MCF 10A (cell line): ENCODE measurements at regions of chr16 and their contacts with region 1.

Region 1: DNA sequence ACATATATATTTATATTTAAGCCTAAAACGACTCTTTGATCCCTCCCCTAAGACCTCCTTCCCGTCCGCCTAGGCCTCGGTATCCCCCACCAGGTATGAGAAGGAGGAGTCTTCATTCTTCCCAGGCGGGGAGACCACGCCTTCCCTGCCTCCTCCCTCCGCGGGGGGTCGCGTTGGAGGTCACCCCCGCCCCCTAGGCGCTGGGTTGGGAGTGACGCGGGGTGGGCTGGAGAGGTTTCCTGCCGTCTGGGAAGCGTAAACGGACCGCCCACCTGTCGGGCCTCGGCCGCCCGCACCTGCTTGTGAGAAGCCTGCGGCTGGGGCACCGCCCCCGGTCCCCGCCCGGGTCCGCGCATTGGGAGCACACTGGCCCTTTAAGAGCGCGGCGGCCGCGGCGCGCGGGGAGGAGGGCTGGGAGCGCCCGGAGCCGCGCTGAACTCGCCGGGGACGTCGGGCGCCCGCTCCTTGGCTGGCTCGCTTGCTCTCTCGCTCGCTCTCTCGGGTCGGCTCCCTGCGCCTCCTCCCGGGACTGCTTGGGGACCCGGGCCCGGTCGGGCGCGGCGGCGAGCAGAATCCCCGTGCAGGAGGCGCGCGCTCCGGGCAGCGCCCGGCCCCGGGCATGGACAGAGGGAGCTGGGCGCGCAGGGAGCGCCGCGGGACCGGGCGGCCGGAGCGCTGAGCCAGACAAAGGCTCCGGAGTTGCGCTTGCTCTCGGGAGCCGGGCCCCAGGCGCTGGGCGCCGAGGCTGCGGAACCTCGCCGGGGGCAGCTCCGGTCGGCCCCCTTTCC is at the start of gene MMP15:
- DNase-seq: peak; percentile 71
- H3K4me3 Mint-ChIP-seq: peak within 1 kb of the TSS; percentile 56
- H3K27ac Mint-ChIP-seq: no peak within 1 kb of the TSS
- H3K4me1 Mint-ChIP-seq: peaks cover 13% of the 10 kb centered on the region
- H3K27me3 Mint-ChIP-seq: no peaks in the 10 kb centered on the region
- CTCF ChIP-seq: no peak
- total RNA-seq, gene MMP15: 1.3 and 1.7 TPM in 2 replicates

Region 2: GRCh38 chr16:58096249-58096648 is 70.7 kb after region 1 on chr16:
- CTCF ChIA-PET with region 1: interaction called, 3 read pairs
- POLR2A ChIA-PET with region 1: no interaction called
- intact Hi-C with region 1: loop called (anchors 2 kb)
- DNase-seq: no peak
- H3K4me3 Mint-ChIP-seq: no peak overlapping the region
- H3K27ac Mint-ChIP-seq: no peak overlapping the region
- H3K4me1 Mint-ChIP-seq: peaks cover 12% of the 10 kb centered on the region
- H3K27me3 Mint-ChIP-seq: peaks cover 17% of the 10 kb centered on the region
- CTCF ChIP-seq: no peak

Region 3: DNA sequence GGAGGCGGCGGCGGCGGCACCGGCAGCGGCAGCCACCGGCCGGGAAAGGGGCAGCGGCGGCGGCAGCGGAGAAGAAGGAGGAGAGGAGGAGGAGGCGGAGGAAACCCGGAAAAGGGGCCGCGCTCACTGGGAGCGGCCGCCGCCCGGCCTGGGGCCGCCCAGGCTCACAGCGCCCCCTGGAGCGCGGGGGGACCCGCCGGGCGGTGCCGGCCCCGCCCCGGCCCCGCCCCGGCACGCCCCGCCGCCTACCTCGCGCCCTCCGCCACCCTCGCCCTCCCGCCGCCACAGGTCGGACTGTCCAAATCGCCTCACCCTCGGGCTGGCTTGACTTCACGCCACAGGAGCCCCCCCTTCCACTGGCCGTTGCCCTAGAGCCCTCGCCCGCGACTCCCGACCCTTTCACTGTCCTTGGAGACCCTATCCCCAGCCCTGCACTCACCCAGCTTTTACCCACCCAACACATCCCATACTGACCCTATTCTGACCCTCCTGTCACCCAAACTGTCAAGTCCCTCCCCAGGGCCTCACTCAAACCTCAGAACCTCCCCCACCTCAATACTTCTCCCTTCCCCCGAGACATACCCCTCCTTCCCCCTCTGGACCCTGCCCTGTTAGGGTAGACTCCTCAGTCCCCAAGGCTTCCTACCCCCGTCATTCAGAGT is 172.6 kb after region 1 on chr16 and contains the start of gene CSNK2A2:
- CTCF ChIA-PET with region 1: interaction called, 4 read pairs
- POLR2A ChIA-PET with region 1: interaction called, 3 read pairs
- intact Hi-C with region 1: loop called (anchors 1 kb)
- DNase-seq: peak; percentile 76
- H3K4me3 Mint-ChIP-seq: peak within 1 kb of the TSS; percentile 86
- H3K27ac Mint-ChIP-seq: peak within 1 kb of the TSS; percentile 77
- H3K4me1 Mint-ChIP-seq: peaks cover 19% of the 10 kb centered on the region
- H3K27me3 Mint-ChIP-seq: no peaks in the 10 kb centered on the region
- CTCF ChIP-seq: peak; percentile 17
- total RNA-seq, gene CSNK2A2: 91.7 and 97.2 TPM in 2 replicates

Region 4: GRCh38 chr16:58306327-58306726 is 280.8 kb after region 1 on chr16:
- CTCF ChIA-PET with region 1: interaction called, 3 read pairs
- POLR2A ChIA-PET with region 1: no interaction called
- intact Hi-C with region 1: loop called (anchors 2 kb)
- DNase-seq: peak; percentile 55
- H3K4me3 Mint-ChIP-seq: no peak overlapping the region
- H3K27ac Mint-ChIP-seq: no peak overlapping the region
- H3K4me1 Mint-ChIP-seq: no peaks in the 10 kb centered on the region
- H3K27me3 Mint-ChIP-seq: peaks cover 20% of the 10 kb centered on the region
- CTCF ChIP-seq: peak; percentile 45